Activated CD4-positive, alpha-beta T cell treated with anti-CD3 and anti-CD28 coated beads, Interleukin-2, amount 10 ng/mL, durations not matched to agents 24 days and 14 days (primary cell): ENCODE measurements at regions of chr1 and their contacts with region 1.

Region 1: GRCh38 chr1:171841050-171841940 is at the start of gene DNM3:
- DNase-seq: peak; percentile 95
- H3K4me3 Mint-ChIP-seq: peak within 1 kb of the TSS; percentile 89
- H3K27ac Mint-ChIP-seq: peak within 1 kb of the TSS; percentile 71
- H3K4me1 Mint-ChIP-seq: peaks cover 12% of the 10 kb centered on the region
- H3K27me3 Mint-ChIP-seq: peaks cover 34% of the 10 kb centered on the region
- total RNA-seq, gene DNM3: 0.42 and 0.45 TPM in 2 replicates

Region 2: GRCh38 chr1:171403371-171403770 is 437.9 kb before region 1 on chr1:
- intact Hi-C with region 1: no loop called
- DNase-seq: no peak
- H3K4me3 Mint-ChIP-seq: no peak overlapping the region
- H3K27ac Mint-ChIP-seq: no peak overlapping the region
- H3K4me1 Mint-ChIP-seq: no peaks in the 10 kb centered on the region
- H3K27me3 Mint-ChIP-seq: peaks cover 5% of the 10 kb centered on the region

Region 3: DNA sequence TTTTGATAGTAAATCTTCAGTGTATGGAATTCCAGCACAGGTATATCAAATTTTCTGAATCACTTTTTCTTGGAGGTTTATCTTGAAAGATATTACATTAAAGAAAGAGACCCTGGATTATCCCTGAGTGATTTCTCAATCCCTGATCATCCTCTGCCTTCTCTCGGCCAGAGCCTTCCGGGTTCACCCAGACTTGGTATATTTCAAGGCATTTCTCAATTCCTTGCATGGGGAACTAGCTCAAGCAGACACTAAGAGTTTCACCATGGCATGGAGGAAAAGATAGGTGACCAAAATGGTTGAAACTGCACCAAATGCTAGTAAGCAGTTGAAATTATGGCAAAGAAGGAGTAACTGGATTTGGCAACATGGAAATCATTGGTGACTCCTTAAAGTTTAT is 105.1 kb before region 1 on chr1:
- intact Hi-C with region 1: no loop called
- DNase-seq: no peak
- H3K4me3 Mint-ChIP-seq: no peak overlapping the region
- H3K27ac Mint-ChIP-seq: no peak overlapping the region
- H3K4me1 Mint-ChIP-seq: peaks cover 34% of the 10 kb centered on the region
- H3K27me3 Mint-ChIP-seq: no peaks in the 10 kb centered on the region

Region 4: GRCh38 chr1:171781176-171781875 is 60.0 kb before region 1 on chr1 and contains the start of gene METTL13:
- intact Hi-C with region 1: loop called (anchors 1 kb)
- DNase-seq: peak; percentile 100
- H3K4me3 Mint-ChIP-seq: peak within 1 kb of the TSS; percentile 98
- H3K27ac Mint-ChIP-seq: peak within 1 kb of the TSS; percentile 94
- H3K4me1 Mint-ChIP-seq: peaks cover 45% of the 10 kb centered on the region
- H3K27me3 Mint-ChIP-seq: no peaks in the 10 kb centered on the region
- total RNA-seq, gene METTL13: 56.1 and 57.8 TPM in 2 replicates

Region 5: DNA sequence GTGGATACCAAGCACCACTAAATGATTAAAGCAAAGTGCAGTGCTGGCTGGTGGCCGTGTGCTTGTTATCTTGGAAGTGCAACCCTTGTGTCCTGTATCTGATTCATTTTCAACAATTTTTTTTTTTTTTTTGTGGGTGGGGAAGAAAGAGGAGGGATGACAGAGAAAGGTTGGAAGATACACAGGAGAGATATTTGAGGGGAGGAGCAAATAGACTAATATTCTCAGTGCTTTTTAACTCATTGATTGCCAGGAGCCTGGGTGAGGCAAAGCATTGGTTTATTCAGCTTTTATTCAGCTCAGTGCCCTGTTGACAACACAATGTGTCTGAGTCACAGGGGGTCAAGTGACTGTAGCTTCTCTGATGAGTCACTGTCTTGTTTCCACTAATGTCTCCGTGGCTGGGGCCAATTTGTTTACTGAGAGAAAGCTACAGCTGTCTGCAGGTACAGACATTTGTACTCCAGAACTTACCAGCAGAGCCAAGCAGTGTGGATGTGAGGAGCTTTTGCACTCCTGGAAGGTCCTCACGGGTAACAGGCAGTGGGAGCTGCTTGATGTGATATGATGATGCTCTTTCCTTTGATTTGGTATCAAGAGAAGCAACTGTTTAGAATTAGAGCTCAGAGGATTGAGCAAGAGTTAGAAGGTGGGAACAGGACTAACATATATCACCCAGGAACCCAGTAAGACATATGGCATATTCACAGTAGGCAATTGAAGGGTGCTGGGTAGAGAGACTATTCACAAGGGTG is 23.6 kb before region 1 on chr1:
- intact Hi-C with region 1: loop called (anchors 2 kb)
- DNase-seq: peak; percentile 78
- H3K4me3 Mint-ChIP-seq: peak overlapping the region; percentile 57
- H3K27ac Mint-ChIP-seq: peak overlapping the region; percentile 86
- H3K4me1 Mint-ChIP-seq: peaks cover 18% of the 10 kb centered on the region
- H3K27me3 Mint-ChIP-seq: no peaks in the 10 kb centered on the region

Region 6: DNA sequence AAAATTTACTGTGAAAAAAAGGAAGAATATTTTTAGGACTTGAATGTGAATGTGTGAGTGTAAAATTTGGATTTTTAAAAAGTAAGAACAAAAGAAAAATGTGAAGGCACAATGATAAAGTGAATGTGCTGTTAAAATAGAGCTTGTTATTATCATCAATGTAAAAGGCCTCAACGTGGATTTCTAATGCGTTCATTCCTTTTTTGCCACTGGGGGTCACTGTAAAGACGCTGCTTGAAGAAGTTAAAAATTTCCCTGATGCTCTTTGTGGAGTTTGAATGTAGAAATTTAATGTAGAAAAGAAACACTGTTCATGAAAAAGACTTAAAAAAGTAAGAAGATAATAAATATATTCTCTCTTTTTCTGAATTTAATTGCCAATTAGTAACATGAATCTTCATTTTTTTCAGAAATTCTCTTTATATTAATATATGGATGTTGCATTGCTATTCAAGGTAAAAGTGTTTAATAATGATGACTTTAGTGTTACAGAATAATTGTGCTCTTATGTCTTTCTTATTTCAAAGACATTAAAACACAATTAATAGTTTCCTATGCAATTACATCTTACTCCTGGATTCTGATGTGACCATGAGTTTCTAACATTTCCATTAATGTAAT is 161.5 kb after region 1 on chr1:
- intact Hi-C with region 1: no loop called
- DNase-seq: peak; percentile 80
- H3K4me3 Mint-ChIP-seq: no peak overlapping the region
- H3K27ac Mint-ChIP-seq: no peak overlapping the region
- H3K4me1 Mint-ChIP-seq: peaks cover 3% of the 10 kb centered on the region
- H3K27me3 Mint-ChIP-seq: peaks cover under 1% of the 10 kb centered on the region